ENCODE measurements at regions of chr17 and their contacts with region 1.

Region 1: GRCh38 chr17:9575381-9576101 is at the start of gene STX8:
- DNase-seq: peak; percentile 91
- ATAC-seq: peak; percentile 64
- H3K4me3 Mint-ChIP-seq: peak within 1 kb of the TSS; percentile 92
- H3K27ac Mint-ChIP-seq: peak within 1 kb of the TSS; percentile 77
- H3K4me1 Mint-ChIP-seq: peaks cover 15% of the 10 kb centered on the region
- H3K27me3 Mint-ChIP-seq: no peaks in the 10 kb centered on the region
- total RNA-seq, gene STX8: 65.7 to 87.7 TPM

Region 2: DNA sequence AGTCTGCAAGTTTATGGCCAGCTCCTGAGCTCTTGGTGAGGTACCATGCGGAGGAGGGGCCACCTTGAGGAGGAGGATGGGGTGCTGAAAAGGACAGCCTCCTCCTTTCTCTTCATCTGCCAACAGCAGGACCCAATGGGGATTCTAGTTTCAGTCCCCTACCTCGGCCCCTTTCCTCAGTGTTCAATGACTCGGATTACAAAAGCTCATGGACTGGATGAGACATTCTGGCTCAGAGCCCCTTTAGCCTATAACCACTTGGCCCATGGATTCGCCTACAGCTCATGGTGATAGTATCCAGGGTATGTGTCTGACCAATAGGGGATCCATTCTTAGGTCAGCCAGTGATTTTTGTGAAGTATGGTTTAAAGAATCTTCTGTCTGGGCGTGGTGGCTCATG is 699.6 kb before region 1 on chr17:
- CTCF ChIA-PET with region 1: no interaction called
- POLR2A ChIA-PET with region 1: no interaction called
- intact Hi-C with region 1: no loop called
- DNase-seq: no peak
- ATAC-seq: peak; percentile 49
- H3K4me3 Mint-ChIP-seq: no peak overlapping the region
- H3K27ac Mint-ChIP-seq: no peak overlapping the region
- H3K4me1 Mint-ChIP-seq: no peaks in the 10 kb centered on the region
- H3K27me3 Mint-ChIP-seq: no peaks in the 10 kb centered on the region

Region 3: GRCh38 chr17:9644910-9645751 is 69.6 kb after region 1 on chr17 and contains the start of gene USP43:
- CTCF ChIA-PET with region 1: interaction called, 3 read pairs
- POLR2A ChIA-PET with region 1: no interaction called
- intact Hi-C with region 1: loop called in 1 of 2 experiments (anchors 2 kb)
- DNase-seq: peak; percentile 52
- ATAC-seq: peak; percentile 69
- H3K4me3 Mint-ChIP-seq: peak within 1 kb of the TSS; percentile 70
- H3K27ac Mint-ChIP-seq: peak within 1 kb of the TSS; percentile 57
- H3K4me1 Mint-ChIP-seq: peaks cover 13% of the 10 kb centered on the region
- H3K27me3 Mint-ChIP-seq: peaks cover 44% of the 10 kb centered on the region
- total RNA-seq, gene USP43: 0.25 to 0.33 TPM

Region 4: DNA sequence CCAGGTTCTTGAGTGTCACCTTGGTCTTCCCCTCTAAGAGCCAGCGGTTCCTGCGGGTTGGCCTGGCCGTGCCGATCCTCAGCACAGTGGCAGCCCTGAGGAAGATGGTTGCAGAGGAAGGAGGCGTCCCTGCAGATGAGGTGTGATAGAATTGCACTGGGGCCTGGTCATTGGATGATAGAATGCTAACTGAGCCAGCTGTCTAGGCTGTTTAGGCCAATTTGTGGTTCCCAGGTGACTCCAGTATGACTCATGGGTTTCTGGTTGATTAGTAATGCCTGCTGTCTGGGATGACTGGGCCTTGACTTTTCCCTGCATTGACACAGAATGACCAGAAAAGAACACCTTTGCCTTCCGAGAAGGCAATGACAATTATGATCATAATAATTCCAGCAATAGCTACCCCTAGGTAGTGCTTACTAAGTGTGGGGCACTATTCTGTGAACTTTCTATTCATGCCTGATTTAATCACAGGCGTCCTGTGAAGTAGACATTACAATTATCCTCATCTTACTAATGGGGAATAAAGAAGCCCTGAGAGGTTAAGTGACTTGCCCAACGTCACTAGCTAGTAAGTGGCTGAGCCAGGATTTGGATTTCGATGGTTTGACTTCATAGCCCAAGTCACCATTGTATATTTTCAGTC is 101.3 kb after region 1 on chr17:
- CTCF ChIA-PET with region 1: interaction called, 4 read pairs
- POLR2A ChIA-PET with region 1: no interaction called
- intact Hi-C with region 1: loop called (anchors 1 to 5 kb)
- DNase-seq: peak; percentile 44
- ATAC-seq: peak; percentile 93
- H3K4me3 Mint-ChIP-seq: no peak overlapping the region
- H3K27ac Mint-ChIP-seq: no peak overlapping the region
- H3K4me1 Mint-ChIP-seq: peaks cover 5% of the 10 kb centered on the region
- H3K27me3 Mint-ChIP-seq: peaks cover 5% of the 10 kb centered on the region

Region 5: GRCh38 chr17:11031787-11032186 is 1456.2 kb after region 1 on chr17:
- CTCF ChIA-PET with region 1: no interaction called
- POLR2A ChIA-PET with region 1: no interaction called
- intact Hi-C with region 1: no loop called
- DNase-seq: no peak
- ATAC-seq: no peak
- H3K4me3 Mint-ChIP-seq: no peak overlapping the region
- H3K27ac Mint-ChIP-seq: no peak overlapping the region
- H3K4me1 Mint-ChIP-seq: no peaks in the 10 kb centered on the region
- H3K27me3 Mint-ChIP-seq: no peaks in the 10 kb centered on the region